ENCODE measurements at regions of chr11 and their contacts with region 1.

Region 1: GRCh38 chr11:118791111-118791965 is at the start of gene DDX6:
- DNase-seq: peak; percentile 95
- H3K4me3 Mint-ChIP-seq: peak within 1 kb of the TSS; percentile 99
- H3K27ac Mint-ChIP-seq: peak within 1 kb of the TSS; percentile 98
- H3K4me1 Mint-ChIP-seq: peaks cover 20% of the 10 kb centered on the region
- H3K27me3 Mint-ChIP-seq: no peaks in the 10 kb centered on the region
- total RNA-seq, gene DDX6: 274 to 279 TPM

Region 2: GRCh38 chr11:118689851-118690552 is 101.3 kb before region 1 on chr11:
- CTCF ChIA-PET with region 1: interaction called, 32 read pairs
- intact Hi-C with region 1: loop called (anchors 1 kb)
- DNase-seq: peak; percentile 96
- H3K4me3 Mint-ChIP-seq: peak overlapping the region; percentile 77
- H3K27ac Mint-ChIP-seq: peak overlapping the region; percentile 82
- H3K4me1 Mint-ChIP-seq: peaks cover 46% of the 10 kb centered on the region
- H3K27me3 Mint-ChIP-seq: no peaks in the 10 kb centered on the region

Region 3: DNA sequence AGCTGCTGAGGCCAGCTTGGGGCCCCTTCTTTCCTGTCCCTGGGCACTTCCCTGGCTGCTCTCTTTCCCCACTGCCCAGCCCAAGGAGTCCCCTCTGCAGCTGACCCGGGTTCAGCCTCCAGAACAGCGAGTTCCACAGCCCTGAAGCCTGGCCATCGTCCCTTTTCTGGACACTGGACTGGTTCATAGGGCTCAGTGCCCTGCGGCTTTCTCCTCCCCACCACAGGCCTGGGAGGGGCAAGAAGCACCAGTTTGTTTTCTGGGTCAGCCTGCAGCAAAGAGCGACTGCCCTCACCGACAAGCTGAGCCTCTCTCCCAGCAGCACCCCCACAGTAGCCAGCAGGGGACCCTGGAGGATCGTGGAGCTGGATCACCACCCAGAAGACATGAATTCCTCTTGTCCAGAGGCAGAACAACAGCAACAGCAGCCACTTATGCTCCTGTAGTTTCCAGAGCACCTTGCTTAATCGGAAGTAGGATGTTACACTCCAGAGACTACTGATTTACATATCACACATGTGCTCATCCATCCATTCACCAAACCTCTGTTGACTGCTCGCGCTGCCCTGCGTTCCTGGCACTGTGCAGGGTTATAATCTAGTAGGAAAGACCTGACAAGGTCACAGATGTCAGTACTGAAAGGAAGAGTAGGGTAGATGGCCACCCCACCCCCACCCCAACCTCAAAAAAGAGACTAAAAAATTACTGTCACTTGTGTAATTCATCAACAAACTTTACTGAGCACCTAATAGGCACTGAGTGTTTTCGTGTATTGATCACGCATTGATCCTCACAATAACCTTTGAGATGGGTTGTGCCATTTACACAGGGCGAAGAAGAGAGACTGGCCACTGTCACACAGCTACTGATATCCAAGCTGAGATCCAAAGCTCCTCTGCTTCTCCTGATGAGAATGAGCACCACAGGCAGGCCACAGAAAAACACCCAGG is 79.3 kb after region 1 on chr11:
- CTCF ChIA-PET with region 1: interaction called, 42 read pairs
- intact Hi-C with region 1: loop called (anchors 1 kb)
- DNase-seq: peak; percentile 80
- H3K4me3 Mint-ChIP-seq: peak overlapping the region; percentile 85
- H3K27ac Mint-ChIP-seq: peak overlapping the region; percentile 100
- H3K4me1 Mint-ChIP-seq: peaks cover 67% of the 10 kb centered on the region
- H3K27me3 Mint-ChIP-seq: no peaks in the 10 kb centered on the region

Region 4: GRCh38 chr11:118883368-118884071 is 92.2 kb after region 1 on chr11 and contains the start of gene CXCR5:
- CTCF ChIA-PET with region 1: interaction called, 76 read pairs
- intact Hi-C with region 1: loop called (anchors 1 kb)
- DNase-seq: peak; percentile 87
- H3K4me3 Mint-ChIP-seq: peak within 1 kb of the TSS; percentile 83
- H3K27ac Mint-ChIP-seq: peak within 1 kb of the TSS; percentile 99
- H3K4me1 Mint-ChIP-seq: peaks cover 84% of the 10 kb centered on the region
- H3K27me3 Mint-ChIP-seq: no peaks in the 10 kb centered on the region
- total RNA-seq, gene CXCR5: 25.6 to 26.1 TPM

Region 5: GRCh38 chr11:118914178-118914918 is 123.0 kb after region 1 on chr11:
- CTCF ChIA-PET with region 1: interaction called, 7 read pairs
- intact Hi-C with region 1: loop called (anchors 1 kb)
- DNase-seq: peak; percentile 93
- H3K4me3 Mint-ChIP-seq: peak overlapping the region; percentile 68
- H3K27ac Mint-ChIP-seq: peak overlapping the region; percentile 99
- H3K4me1 Mint-ChIP-seq: peaks cover 80% of the 10 kb centered on the region
- H3K27me3 Mint-ChIP-seq: no peaks in the 10 kb centered on the region

Region 6: GRCh38 chr11:118997627-118998387 is 206.5 kb after region 1 on chr11 and contains the start of gene CENATAC:
- CTCF ChIA-PET with region 1: no interaction called
- intact Hi-C with region 1: loop called (anchors 5 kb)
- DNase-seq: peak; percentile 98
- H3K4me3 Mint-ChIP-seq: peak within 1 kb of the TSS; percentile 88
- H3K27ac Mint-ChIP-seq: peak within 1 kb of the TSS; percentile 96
- H3K4me1 Mint-ChIP-seq: peaks cover 33% of the 10 kb centered on the region
- H3K27me3 Mint-ChIP-seq: no peaks in the 10 kb centered on the region
- total RNA-seq, gene CENATAC: 17.4 to 18.0 TPM

Region 7: DNA sequence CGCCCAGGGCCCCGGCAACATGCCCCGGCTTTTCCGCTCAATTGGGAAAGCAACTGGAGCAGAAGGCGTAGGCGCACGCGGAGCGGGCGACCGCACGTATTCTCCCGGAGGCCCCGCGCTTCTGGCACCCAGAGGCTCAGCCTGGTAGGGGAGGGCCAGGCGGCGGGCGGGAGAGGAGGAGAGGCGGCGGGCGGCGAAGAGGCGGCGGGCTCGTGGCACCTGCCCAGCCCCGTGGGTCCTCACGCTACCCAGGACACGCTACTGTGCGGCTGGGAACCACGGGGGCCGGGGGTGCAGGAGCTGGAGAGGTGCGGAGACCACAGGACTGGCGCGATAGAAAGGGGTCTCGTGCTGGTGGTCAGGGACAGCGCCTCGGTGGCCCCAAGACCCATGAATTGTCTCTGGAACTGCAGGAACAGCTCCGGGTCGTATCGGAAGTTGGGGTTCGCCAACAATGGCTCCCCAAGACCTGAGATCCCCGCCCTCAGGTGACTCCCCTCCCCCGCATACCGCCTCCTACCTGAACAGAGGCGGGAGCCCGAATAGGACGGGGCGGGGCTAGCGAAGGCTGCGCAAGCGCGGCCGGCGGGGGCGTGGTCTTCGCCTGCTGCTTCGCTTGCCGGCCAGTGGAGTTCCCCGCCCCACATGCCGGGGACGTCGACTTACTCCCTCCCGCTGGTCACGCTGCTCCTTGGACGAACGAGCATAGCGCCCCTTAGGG is 239.2 kb after region 1 on chr11 and contains the start of gene SLC37A4:
- CTCF ChIA-PET with region 1: no interaction called
- intact Hi-C with region 1: loop called (anchors 1 kb)
- DNase-seq: peak; percentile 99
- H3K4me3 Mint-ChIP-seq: peak within 1 kb of the TSS; percentile 77
- H3K27ac Mint-ChIP-seq: peak within 1 kb of the TSS; percentile 85
- H3K4me1 Mint-ChIP-seq: peaks cover 23% of the 10 kb centered on the region
- H3K27me3 Mint-ChIP-seq: no peaks in the 10 kb centered on the region
- total RNA-seq, gene SLC37A4: 28.3 to 30.3 TPM